A673 (cell line): ENCODE measurements at regions of chr2 and their contacts with region 1.

Region 1: DNA sequence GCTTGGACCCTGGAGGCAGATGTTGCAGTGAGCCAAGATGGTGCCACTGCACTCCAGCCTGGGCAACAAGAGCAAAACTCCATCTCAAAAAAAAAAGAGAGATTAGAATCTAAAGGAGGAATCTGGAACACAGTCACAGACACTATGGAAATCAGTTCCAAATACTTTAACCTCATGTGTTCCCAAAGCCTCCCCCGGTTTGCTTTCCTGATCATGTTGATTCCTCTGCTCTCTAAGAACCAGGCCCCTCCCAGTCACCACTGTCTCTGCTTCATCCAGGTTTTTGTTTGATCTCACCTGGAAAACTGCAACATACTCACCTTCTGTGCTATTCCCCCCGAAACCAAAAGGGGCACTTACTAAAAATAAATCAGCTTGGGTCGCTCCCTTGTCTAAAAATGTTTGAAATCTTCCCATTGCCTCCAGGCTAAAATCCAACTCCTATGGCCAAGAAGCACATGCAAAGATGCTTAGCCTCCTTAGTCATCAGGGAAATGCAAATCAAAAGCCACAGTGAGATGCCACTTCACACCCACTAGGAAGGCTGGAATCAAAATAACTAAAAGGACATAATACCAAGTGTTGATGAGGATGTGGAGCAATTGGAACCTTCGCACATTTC is 6.2 kb upstream of the NEU2 start:
- DNase-seq: no peak
- H3K4me3 ChIP-seq: no peak overlapping the region
- H3K27ac ChIP-seq: no peak overlapping the region
- H3K4me1 ChIP-seq: no peaks in the 10 kb centered on the region
- H3K27me3 ChIP-seq: no peaks in the 10 kb centered on the region
- CTCF ChIP-seq: no peak

Region 2: DNA sequence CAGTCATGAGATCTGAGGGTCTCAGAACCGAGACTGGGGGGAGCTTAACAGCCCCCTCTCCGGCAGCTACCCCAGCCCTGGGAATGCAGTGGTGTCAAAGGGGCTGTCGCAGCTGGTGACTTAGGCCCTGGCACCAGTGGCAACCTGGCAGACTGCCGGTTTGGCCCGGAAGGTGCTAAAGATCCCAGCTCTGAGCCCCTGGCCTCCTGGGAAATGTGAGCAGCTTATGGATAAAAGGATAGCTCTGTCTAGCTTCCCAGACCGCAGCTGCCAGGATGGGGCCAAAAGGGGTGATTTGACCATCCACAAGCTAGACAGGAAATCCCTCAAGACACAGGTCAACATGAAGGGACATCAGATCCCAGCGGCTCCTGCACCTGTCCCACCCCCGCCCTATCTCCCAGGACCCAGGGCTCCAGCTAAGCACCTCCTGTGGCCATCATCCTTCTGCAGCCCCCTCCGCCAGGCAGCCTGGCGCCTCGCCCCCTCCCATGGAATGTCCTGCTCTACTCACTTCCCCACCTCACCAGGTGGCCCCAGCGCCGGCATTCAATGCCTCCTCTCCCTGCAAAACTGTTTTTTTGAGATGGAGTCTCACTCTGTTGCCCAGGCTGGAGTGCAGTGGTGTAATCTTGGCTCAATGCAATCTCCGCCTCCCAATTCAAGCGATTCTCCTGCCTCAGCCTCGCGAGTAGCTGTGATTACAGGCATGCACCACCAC is 426.1 kb before region 1 on chr2:
- CTCF ChIA-PET with region 1: interaction called, 3 read pairs
- POLR2A ChIA-PET with region 1: no interaction called
- intact Hi-C with region 1: loop called (anchors 10 kb)
- DNase-seq: no peak
- H3K4me3 ChIP-seq: no peak overlapping the region
- H3K27ac ChIP-seq: no peak overlapping the region
- H3K4me1 ChIP-seq: no peaks in the 10 kb centered on the region
- H3K27me3 ChIP-seq: no peaks in the 10 kb centered on the region
- CTCF ChIP-seq: no peak

Region 3: GRCh38 chr2:232854082-232854481 is 172.2 kb before region 1 on chr2:
- CTCF ChIA-PET with region 1: no interaction called
- POLR2A ChIA-PET with region 1: no interaction called
- intact Hi-C with region 1: loop called (anchors 2 kb)
- DNase-seq: peak; percentile 74
- H3K4me3 ChIP-seq: no peak overlapping the region
- H3K27ac ChIP-seq: no peak overlapping the region
- H3K4me1 ChIP-seq: peaks cover 10% of the 10 kb centered on the region
- H3K27me3 ChIP-seq: no peaks in the 10 kb centered on the region
- CTCF ChIP-seq: no peak

Region 4: GRCh38 chr2:233202531-233202944 is 176.2 kb after region 1 on chr2:
- CTCF ChIA-PET with region 1: no interaction called
- POLR2A ChIA-PET with region 1: no interaction called
- intact Hi-C with region 1: no loop called
- DNase-seq: peak; percentile 60
- H3K4me3 ChIP-seq: no peak overlapping the region
- H3K27ac ChIP-seq: no peak overlapping the region
- H3K4me1 ChIP-seq: no peaks in the 10 kb centered on the region
- H3K27me3 ChIP-seq: no peaks in the 10 kb centered on the region
- CTCF ChIP-seq: no peak